ENCODE measurements at regions of chr22 and their contacts with region 1.

Region 1: DNA sequence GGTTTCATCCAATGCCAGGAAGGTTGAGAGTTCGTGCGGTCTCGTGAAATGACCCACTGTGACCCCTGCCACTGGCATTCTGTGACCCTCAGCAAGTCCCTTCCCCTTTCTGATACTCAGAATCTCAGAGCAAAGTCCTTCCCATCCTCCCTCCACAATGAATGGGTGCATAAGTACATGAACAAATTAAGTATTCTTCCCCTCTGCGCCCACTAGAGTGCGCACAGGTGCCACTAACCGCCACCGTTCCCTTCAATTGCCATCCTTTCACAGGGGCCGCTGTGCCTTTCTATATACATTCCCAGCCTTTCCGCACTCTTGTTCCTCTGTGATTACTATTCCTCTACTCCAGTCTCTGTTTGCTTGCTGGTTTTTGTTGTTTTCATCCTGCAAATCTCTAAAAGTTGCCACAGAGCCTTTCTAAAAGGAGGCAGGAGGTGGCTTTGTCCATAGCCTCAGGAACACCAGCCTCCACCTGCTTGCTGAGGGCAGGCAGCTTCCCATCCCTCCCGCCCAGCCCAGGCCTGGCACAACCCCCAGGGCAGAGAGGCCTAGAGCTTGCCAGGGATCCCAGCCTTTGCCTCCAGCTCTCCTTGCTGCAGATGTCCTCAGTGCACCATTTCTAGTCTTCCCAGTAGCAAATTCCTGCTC is 6.7 kb upstream of the AP1B1 start:
- DNase-seq: peak; percentile 84 to 88
- H3K4me3 ChIP-seq: no peak overlapping the region
- H3K4me1 ChIP-seq: peaks cover 8% of the 10 kb centered on the region
- H3K27me3 ChIP-seq: no peaks in the 10 kb centered on the region

Region 2: GRCh38 chr22:29524440-29525191 is 129.6 kb after region 1 on chr22:
- in situ Hi-C with region 1: loop called (anchors 10 kb)
- DNase-seq: peak in 1 of 2 experiments; percentile 57
- H3K4me3 ChIP-seq: no peak overlapping the region
- H3K4me1 ChIP-seq: no peaks in the 10 kb centered on the region; the same call in 1 of the 2 replicates
- H3K27me3 ChIP-seq: no peaks in the 10 kb centered on the region

Measured in HAP-1 (cell line).